Activated T-helper 1 cell treated with anti-CD3 and anti-CD28 coated beads, Interleukin-12 subunit alpha, Interleukin-12 subunit beta, Interleukin-2, Interleukin-4 antibody, amounts not matched to agents 30 ng/mL and 10 ng/mL and 1 ng/mL, durations not matched to agents 14 hours and 24 hours and 36 hours (primary cell): ENCODE measurements at regions of chr17 and their contacts with region 1.

Region 1: DNA sequence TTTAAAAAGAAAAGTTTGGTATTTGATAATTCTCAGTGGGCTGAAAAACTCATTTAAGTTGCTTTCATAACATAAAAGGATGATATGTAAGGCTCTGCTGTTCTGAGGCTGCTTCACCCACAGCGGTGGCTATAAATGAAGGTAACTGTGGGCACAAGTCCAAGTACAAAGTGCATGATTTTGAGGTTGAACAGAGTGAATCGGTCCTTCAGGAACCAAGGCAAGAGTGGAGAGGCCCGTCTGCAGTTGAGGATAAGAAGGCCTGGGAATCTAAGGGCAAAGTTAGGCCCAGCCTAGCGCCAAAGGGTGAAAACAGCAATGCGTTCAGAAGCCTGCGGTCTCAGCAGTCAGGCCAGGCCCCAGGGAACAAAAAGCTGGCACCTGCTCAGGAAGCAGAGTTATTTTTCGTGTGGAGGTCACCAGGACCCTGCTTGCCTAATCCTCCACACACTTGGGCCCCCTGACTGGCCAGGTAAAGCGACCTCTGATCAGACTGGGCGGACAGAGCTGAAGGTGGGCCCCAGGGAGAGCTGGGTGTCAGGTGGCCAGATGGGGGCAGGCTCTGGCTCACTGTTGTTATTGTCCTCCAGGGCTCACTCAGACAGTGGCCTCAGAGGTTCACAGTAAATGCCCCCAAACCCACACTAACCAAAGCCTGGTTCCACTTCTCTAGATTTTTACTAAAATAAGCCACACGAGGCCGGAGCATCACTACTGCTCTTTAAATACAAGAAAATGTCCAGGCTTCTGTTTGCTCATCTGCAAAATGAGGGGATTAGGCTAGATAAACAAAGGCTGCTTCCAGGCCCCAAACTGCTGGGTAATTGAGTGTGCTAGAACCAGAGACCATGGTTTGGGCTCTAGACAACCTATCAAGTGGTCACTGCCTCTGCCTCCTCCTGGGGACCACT is 46.5 kb downstream of the TEX2 start:
- DNase-seq: no peak
- H3K4me3 Mint-ChIP-seq: no peak overlapping the region
- H3K27ac Mint-ChIP-seq: no peak overlapping the region
- H3K4me1 Mint-ChIP-seq: peaks cover 16% of the 10 kb centered on the region
- H3K27me3 Mint-ChIP-seq: peaks cover 2% of the 10 kb centered on the region

Region 2: GRCh38 chr17:64200080-64201032 is 16.2 kb before region 1 on chr17:
- intact Hi-C with region 1: loop called (anchors 1 kb)
- DNase-seq: no peak
- H3K4me3 Mint-ChIP-seq: no peak overlapping the region
- H3K27ac Mint-ChIP-seq: peak overlapping the region; percentile 27
- H3K4me1 Mint-ChIP-seq: peaks cover 39% of the 10 kb centered on the region
- H3K27me3 Mint-ChIP-seq: no peaks in the 10 kb centered on the region

Region 3: GRCh38 chr17:64378890-64379354 is 162.3 kb after region 1 on chr17:
- intact Hi-C with region 1: no loop called
- DNase-seq: no peak
- H3K4me3 Mint-ChIP-seq: no peak overlapping the region
- H3K27ac Mint-ChIP-seq: no peak overlapping the region
- H3K4me1 Mint-ChIP-seq: peaks cover under 1% of the 10 kb centered on the region
- H3K27me3 Mint-ChIP-seq: peaks cover 8% of the 10 kb centered on the region